A673 (cell line): ENCODE measurements at regions of chr17 and their contacts with region 1.

Region 1: GRCh38 chr17:82367724-82368524 is 3.6 kb upstream of the UTS2R start:
- DNase-seq: peak; percentile 88
- H3K4me3 ChIP-seq: peak overlapping the region; percentile 17
- H3K27ac ChIP-seq: no peak overlapping the region
- H3K4me1 ChIP-seq: peaks cover 16% of the 10 kb centered on the region
- H3K27me3 ChIP-seq: peaks cover 4% of the 10 kb centered on the region
- CTCF ChIP-seq: no peak

Region 2: DNA sequence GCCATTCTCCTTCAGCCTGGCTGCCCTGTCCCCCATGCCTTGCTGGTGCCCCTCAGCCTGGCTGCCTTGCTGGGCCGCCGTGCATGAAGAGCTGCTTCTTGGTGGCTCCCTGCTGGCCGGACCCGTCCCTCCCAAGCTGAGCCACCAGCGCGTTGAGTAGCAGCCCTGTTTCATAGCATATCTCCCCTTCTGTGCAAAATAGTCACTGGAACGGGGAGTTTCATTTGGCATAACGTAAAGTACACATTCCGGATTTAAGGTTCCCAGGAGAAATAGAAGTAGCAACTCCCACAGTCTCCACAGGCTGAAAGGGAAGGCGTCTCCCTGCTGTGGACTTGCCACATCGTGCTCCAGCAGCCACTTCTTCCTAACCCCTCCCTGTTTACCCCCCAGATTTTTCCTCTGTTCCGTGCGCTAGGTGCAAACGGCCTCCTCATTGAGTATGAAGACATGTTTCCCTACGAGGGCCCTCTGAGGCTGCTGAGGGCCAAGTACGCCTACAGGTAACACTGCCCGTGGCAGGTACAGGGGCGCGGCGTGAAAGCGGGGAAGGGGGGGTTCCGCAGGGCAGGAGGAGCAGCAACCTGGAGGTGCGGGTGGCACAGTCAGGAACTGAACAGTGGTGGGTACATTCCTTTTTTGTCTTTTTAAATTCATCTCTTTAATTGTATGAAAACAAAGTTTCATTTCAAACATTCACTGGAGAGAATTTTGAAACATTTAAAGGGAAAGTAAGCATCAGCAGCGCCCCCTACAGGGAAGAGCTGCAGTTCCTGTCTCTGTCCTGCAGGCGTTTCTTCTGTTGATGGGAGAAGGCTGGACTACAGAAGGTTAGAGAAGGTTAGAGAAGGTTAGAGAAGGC is 56.3 kb after region 1 on chr17:
- CTCF ChIA-PET with region 1: no interaction called
- POLR2A ChIA-PET with region 1: interaction called, 13 read pairs
- intact Hi-C with region 1: no loop called
- DNase-seq: peak; percentile 67
- H3K4me3 ChIP-seq: peak overlapping the region; percentile 39
- H3K27ac ChIP-seq: no peak overlapping the region
- H3K4me1 ChIP-seq: peaks cover 3% of the 10 kb centered on the region
- H3K27me3 ChIP-seq: no peaks in the 10 kb centered on the region
- CTCF ChIP-seq: peak; percentile 96

Region 3: DNA sequence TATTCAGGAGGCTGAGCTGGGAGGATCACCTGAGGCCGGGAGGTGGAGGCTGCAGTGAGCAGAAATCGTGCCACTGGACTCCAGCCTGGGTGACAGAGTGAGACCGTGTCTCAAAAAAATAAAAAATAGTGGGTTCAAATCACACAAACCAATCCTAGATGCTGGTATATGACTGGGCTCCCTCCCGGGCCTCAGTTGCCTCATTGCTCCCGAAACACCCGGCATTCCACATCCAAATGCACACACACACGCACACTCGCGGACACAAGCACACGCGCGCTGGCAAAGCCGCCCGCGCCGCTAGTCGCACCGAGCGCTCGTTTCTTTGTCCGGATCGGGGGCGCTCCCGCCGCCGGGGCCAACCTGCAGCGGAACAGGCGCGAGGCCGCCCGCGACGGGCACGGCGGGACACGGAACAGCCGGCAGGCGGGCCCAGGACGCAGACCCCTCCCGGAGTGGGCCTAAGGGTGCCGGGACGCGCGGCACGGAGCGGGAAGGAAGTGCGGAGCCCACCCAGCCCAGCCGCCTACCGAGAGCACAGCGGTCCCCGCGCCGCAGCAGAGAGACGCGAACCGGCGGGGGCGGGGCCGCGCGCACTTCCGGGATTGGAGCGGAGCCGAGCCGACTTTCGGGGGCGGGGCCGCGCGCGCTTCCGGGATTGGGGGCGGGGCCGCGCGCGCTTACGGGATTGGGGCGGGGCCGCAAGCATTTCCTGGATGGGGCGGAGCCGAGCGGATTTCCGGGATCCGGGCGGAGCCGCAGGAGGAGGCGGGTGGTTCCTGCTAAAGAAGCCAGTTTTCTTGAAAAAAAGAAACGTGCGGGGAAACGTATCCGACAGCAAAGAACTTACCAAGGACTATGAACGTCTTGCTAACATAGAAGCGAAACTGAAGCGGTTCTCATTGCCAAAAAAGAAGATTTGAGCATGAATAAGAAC is 82.5 kb after region 1 on chr17 and contains the start of gene CYBC1:
- CTCF ChIA-PET with region 1: no interaction called
- POLR2A ChIA-PET with region 1: no interaction called
- intact Hi-C with region 1: no loop called
- DNase-seq: peak; percentile 95
- H3K4me3 ChIP-seq: peak within 1 kb of the TSS; percentile 99
- H3K27ac ChIP-seq: peak within 1 kb of the TSS; percentile 93
- H3K4me1 ChIP-seq: peaks cover 14% of the 10 kb centered on the region
- H3K27me3 ChIP-seq: no peaks in the 10 kb centered on the region
- CTCF ChIP-seq: no peak
- total RNA-seq, gene CYBC1: 72.8 and 91.1 TPM in 2 replicates